ENCODE measurements at regions of chr13 and their contacts with region 1.

Region 1: GRCh38 chr13:108155185-108156106 is 59.9 kb downstream of the LIG4 start:
- DNase-seq: peak; percentile 77
- ATAC-seq: peak; percentile 22; the same call in 1 of the 2 replicates
- H3K4me3 ChIP-seq: no peak overlapping the region
- H3K27ac ChIP-seq: no peak overlapping the region
- H3K4me1 ChIP-seq: no peaks in the 10 kb centered on the region; the same call in 1 of the 2 replicates
- H3K27me3 ChIP-seq: no peaks in the 10 kb centered on the region
- CTCF ChIP-seq: peak; percentile 91

Region 2: GRCh38 chr13:107211073-107211472 is 944.4 kb before region 1 on chr13:
- CTCF ChIA-PET with region 1: interaction called, 3 read pairs
- POLR2A ChIA-PET with region 1: no interaction called
- intact Hi-C with region 1: loop called (anchors 2 kb)
- DNase-seq: peak; percentile 88
- ATAC-seq: peak; percentile 93
- H3K4me3 ChIP-seq: peak overlapping the region; percentile 46; the same call in 1 of the 2 replicates
- H3K27ac ChIP-seq: no peak overlapping the region
- H3K4me1 ChIP-seq: peaks cover 13% of the 10 kb centered on the region; the same call in 1 of the 2 replicates
- H3K27me3 ChIP-seq: no peaks in the 10 kb centered on the region
- CTCF ChIP-seq: peak; percentile 89

Region 3: GRCh38 chr13:107373551-107373950 is 781.9 kb before region 1 on chr13:
- CTCF ChIA-PET with region 1: no interaction called
- POLR2A ChIA-PET with region 1: no interaction called
- intact Hi-C with region 1: loop called (anchors 1 kb)
- DNase-seq: peak; percentile 75
- ATAC-seq: peak; percentile 76
- H3K4me3 ChIP-seq: no peak overlapping the region
- H3K27ac ChIP-seq: no peak overlapping the region
- H3K4me1 ChIP-seq: peaks cover 21% of the 10 kb centered on the region; the same call in 1 of the 2 replicates
- H3K27me3 ChIP-seq: no peaks in the 10 kb centered on the region
- CTCF ChIP-seq: peak; percentile 76

Region 4: DNA sequence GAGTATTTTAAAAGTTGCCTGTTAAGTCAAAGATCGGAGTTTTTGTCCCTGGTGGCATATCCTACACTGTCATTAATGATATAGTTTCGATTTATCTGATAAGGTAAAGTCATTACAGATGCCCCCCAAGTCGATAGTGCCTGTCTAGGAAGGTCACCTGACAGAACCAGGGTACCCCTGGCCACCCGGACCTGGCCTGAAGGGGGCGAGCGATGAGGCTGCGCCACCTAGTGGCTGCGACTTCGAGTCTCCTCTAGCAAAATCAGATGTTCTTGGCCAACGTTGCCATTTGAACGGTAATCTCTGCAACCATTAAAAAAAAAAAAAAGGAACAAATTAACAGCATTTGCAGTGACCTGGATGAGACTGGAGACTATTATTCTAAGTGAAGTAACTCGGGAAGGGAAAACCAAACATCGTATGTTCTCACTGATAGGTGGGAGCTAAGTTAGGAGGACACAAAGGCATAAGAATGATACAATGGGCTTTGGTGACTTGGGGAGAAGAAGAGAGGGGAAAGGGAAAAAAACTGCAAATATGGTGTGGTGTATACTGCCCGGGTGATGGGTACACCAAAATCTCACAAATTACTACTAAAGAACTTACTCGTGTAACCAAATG is 505.3 kb before region 1 on chr13:
- CTCF ChIA-PET with region 1: interaction called, 3 read pairs
- POLR2A ChIA-PET with region 1: no interaction called
- intact Hi-C with region 1: loop called (anchors 10 kb)
- DNase-seq: peak; percentile 61
- ATAC-seq: peak; percentile 81
- H3K4me3 ChIP-seq: no peak overlapping the region
- H3K27ac ChIP-seq: no peak overlapping the region
- H3K4me1 ChIP-seq: no peaks in the 10 kb centered on the region
- H3K27me3 ChIP-seq: no peaks in the 10 kb centered on the region
- CTCF ChIP-seq: peak; percentile 89

Region 5: GRCh38 chr13:107678075-107678689 is 477.3 kb before region 1 on chr13:
- CTCF ChIA-PET with region 1: no interaction called
- POLR2A ChIA-PET with region 1: no interaction called
- intact Hi-C with region 1: loop called (anchors 1 kb)
- DNase-seq: peak; percentile 43
- ATAC-seq: peak; percentile 40
- H3K4me3 ChIP-seq: no peak overlapping the region
- H3K27ac ChIP-seq: no peak overlapping the region
- H3K4me1 ChIP-seq: no peaks in the 10 kb centered on the region
- H3K27me3 ChIP-seq: no peaks in the 10 kb centered on the region
- CTCF ChIP-seq: peak; percentile 43; the same call in 1 of the 2 replicates

Region 6: GRCh38 chr13:107883561-107884175 is 271.8 kb before region 1 on chr13:
- CTCF ChIA-PET with region 1: no interaction called
- POLR2A ChIA-PET with region 1: no interaction called
- intact Hi-C with region 1: loop called (anchors 5 kb)
- DNase-seq: peak; percentile 93
- ATAC-seq: peak; percentile 80
- H3K4me3 ChIP-seq: peak overlapping the region; percentile 58
- H3K27ac ChIP-seq: peak overlapping the region; percentile 76
- H3K4me1 ChIP-seq: peaks cover 59% of the 10 kb centered on the region
- H3K27me3 ChIP-seq: no peaks in the 10 kb centered on the region
- CTCF ChIP-seq: no peak

Region 7: GRCh38 chr13:107993239-107993872 is 162.1 kb before region 1 on chr13:
- CTCF ChIA-PET with region 1: no interaction called
- POLR2A ChIA-PET with region 1: no interaction called
- intact Hi-C with region 1: no loop called
- DNase-seq: peak; percentile 55
- ATAC-seq: peak; percentile 90
- H3K4me3 ChIP-seq: no peak overlapping the region
- H3K27ac ChIP-seq: peak overlapping the region; percentile 42
- H3K4me1 ChIP-seq: peaks cover 21% of the 10 kb centered on the region
- H3K27me3 ChIP-seq: no peaks in the 10 kb centered on the region
- CTCF ChIP-seq: no peak

Region 8: GRCh38 chr13:108102771-108103170 is 52.7 kb before region 1 on chr13:
- CTCF ChIA-PET with region 1: no interaction called
- POLR2A ChIA-PET with region 1: no interaction called
- intact Hi-C with region 1: loop called (anchors 5 kb)
- DNase-seq: peak; percentile 57
- ATAC-seq: peak; percentile 81
- H3K4me3 ChIP-seq: no peak overlapping the region
- H3K27ac ChIP-seq: no peak overlapping the region
- H3K4me1 ChIP-seq: peaks cover 19% of the 10 kb centered on the region
- H3K27me3 ChIP-seq: no peaks in the 10 kb centered on the region
- CTCF ChIP-seq: no peak

Region 9: GRCh38 chr13:108249150-108249549 is 93.7 kb after region 1 on chr13:
- CTCF ChIA-PET with region 1: no interaction called
- POLR2A ChIA-PET with region 1: no interaction called
- intact Hi-C with region 1: no loop called
- DNase-seq: no peak
- ATAC-seq: no peak
- H3K4me3 ChIP-seq: no peak overlapping the region
- H3K27ac ChIP-seq: no peak overlapping the region
- H3K4me1 ChIP-seq: no peaks in the 10 kb centered on the region
- H3K27me3 ChIP-seq: no peaks in the 10 kb centered on the region
- CTCF ChIP-seq: no peak